PC-3 (cell line): ENCODE measurements at regions of chr21 and their contacts with region 1.

Region 1: GRCh38 chr21:44873356-44874239 is at the start of gene PTTG1IP:
- DNase-seq: peak; percentile 99
- ATAC-seq: peak; percentile 48
- H3K4me3 ChIP-seq: peak within 1 kb of the TSS; percentile 80
- H3K27ac ChIP-seq: peak within 1 kb of the TSS; percentile 82
- H3K4me1 ChIP-seq: peaks cover 59% of the 10 kb centered on the region
- H3K27me3 ChIP-seq: no peaks in the 10 kb centered on the region
- CTCF ChIP-seq: no peak
- total RNA-seq, gene PTTG1IP: 330 and 455 TPM in 2 replicates

Region 2: DNA sequence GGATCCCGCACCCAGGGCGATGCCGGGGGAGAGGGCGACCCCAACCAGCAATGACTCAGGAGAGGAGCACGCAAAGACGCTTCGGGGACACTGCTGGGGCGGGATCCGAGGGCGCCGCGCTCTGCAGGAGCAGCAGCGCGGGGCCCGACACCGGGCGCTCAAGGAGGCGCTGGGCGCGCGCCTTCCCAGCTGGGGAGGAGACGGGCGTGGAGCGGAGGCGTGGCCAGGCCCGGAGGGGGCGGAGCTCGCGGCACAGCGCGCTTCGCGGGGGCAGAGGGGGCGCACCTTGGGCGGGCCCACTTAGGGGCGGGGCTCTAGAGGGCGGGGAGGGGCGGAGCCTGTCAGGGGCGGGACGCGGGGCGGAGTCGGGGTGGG is 56.1 kb before region 1 on chr21:
- CTCF ChIA-PET with region 1: no interaction called
- POLR2A ChIA-PET with region 1: interaction called, 4 read pairs
- intact Hi-C with region 1: loop called (anchors 2 kb)
- DNase-seq: peak; percentile 92
- ATAC-seq: peak; percentile 89
- H3K4me3 ChIP-seq: peak overlapping the region; percentile 99
- H3K27ac ChIP-seq: peak overlapping the region; percentile 59
- H3K4me1 ChIP-seq: peaks cover 12% of the 10 kb centered on the region
- H3K27me3 ChIP-seq: no peaks in the 10 kb centered on the region
- CTCF ChIP-seq: no peak

Region 3: GRCh38 chr21:44911389-44912157 is 38.0 kb after region 1 on chr21:
- CTCF ChIA-PET with region 1: interaction called, 3 read pairs
- POLR2A ChIA-PET with region 1: interaction called, 4 read pairs
- intact Hi-C with region 1: loop called (anchors 5 kb)
- DNase-seq: peak; percentile 92
- ATAC-seq: peak; percentile 72
- H3K4me3 ChIP-seq: no peak overlapping the region
- H3K27ac ChIP-seq: peak overlapping the region; percentile 76
- H3K4me1 ChIP-seq: peaks cover 64% of the 10 kb centered on the region
- H3K27me3 ChIP-seq: no peaks in the 10 kb centered on the region
- CTCF ChIP-seq: peak; percentile 93

Region 4: GRCh38 chr21:45000977-45001728 is 127.6 kb after region 1 on chr21:
- CTCF ChIA-PET with region 1: no interaction called
- POLR2A ChIA-PET with region 1: no interaction called
- intact Hi-C with region 1: no loop called
- DNase-seq: peak; percentile 94
- ATAC-seq: peak; percentile 93
- H3K4me3 ChIP-seq: no peak overlapping the region
- H3K27ac ChIP-seq: no peak overlapping the region
- H3K4me1 ChIP-seq: peaks cover 21% of the 10 kb centered on the region
- H3K27me3 ChIP-seq: no peaks in the 10 kb centered on the region
- CTCF ChIP-seq: no peak